ENCODE measurements at regions of chrX and their contacts with region 1.

Region 1: DNA sequence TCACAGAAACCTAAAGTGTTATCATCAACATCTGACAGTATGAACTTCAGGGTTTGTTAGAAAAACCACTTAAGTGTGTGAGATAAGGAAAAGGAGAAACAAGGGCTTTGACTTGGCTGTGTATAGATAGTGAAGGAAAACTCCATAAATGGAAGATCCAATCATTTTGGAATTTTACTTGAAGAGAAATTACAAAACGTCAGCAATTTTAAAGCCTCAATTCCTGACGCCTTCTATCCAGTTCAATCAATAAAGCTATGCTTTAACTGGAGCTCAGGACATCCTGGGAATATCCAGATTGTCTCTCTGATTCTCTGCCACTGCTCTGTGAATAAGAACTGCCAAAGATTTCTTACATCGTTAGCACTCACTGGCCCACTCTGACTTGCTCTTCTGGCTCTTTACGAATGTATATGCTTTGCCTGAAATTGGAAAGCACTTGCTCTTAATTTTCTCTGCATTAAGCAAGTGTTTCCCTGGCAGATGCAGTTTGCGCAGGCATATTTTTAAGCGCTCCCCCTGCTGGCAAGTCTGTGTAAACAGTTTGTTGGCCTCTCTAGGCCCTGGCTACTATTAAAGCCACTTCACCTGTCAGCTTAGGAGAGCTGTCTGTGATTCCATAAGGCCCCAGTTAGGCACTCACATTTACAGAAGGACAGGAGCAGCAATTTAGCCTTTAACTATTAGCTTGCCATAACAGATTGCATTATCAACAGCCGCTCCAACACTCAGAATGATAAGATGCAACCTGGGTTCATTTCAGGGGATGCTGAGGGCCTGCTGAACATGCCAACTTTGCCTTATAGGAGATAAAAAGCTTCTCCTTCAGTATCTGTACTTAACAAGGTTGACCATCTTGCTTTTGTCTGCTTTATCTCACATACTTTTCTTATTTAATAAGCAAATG is 251.4 kb upstream of the DDX53 start:
- DNase-seq: peak; percentile 68
- H3K4me3 Mint-ChIP-seq: no peak overlapping the region
- H3K27ac Mint-ChIP-seq: no peak overlapping the region
- H3K4me1 Mint-ChIP-seq: no peaks in the 10 kb centered on the region
- H3K27me3 Mint-ChIP-seq: peaks cover 79% of the 10 kb centered on the region
- CTCF ChIP-seq: peak; percentile 74

Region 2: GRCh38 chrX:22081475-22082092 is 666.8 kb before region 1 on chrX:
- CTCF ChIA-PET with region 1: interaction called, 5 read pairs
- POLR2A ChIA-PET with region 1: no interaction called
- intact Hi-C with region 1: loop called (anchors 5 kb)
- DNase-seq: peak; percentile 79
- H3K4me3 Mint-ChIP-seq: no peak overlapping the region
- H3K27ac Mint-ChIP-seq: no peak overlapping the region
- H3K4me1 Mint-ChIP-seq: peaks cover 6% of the 10 kb centered on the region
- H3K27me3 Mint-ChIP-seq: peaks cover 53% of the 10 kb centered on the region
- CTCF ChIP-seq: peak; percentile 86

Region 3: GRCh38 chrX:22192417-22193060 is 555.8 kb before region 1 on chrX:
- CTCF ChIA-PET with region 1: no interaction called
- POLR2A ChIA-PET with region 1: no interaction called
- intact Hi-C with region 1: loop called (anchors 5 kb)
- DNase-seq: peak; percentile 75
- H3K4me3 Mint-ChIP-seq: no peak overlapping the region
- H3K27ac Mint-ChIP-seq: no peak overlapping the region
- H3K4me1 Mint-ChIP-seq: peaks cover 6% of the 10 kb centered on the region
- H3K27me3 Mint-ChIP-seq: peaks cover 60% of the 10 kb centered on the region
- CTCF ChIP-seq: peak; percentile 76

Region 4: GRCh38 chrX:22365460-22365859 is 382.9 kb before region 1 on chrX:
- CTCF ChIA-PET with region 1: interaction called, 3 read pairs
- POLR2A ChIA-PET with region 1: no interaction called
- intact Hi-C with region 1: loop called (anchors 10 kb)
- DNase-seq: peak; percentile 96
- H3K4me3 Mint-ChIP-seq: peak overlapping the region; percentile 38
- H3K27ac Mint-ChIP-seq: peak overlapping the region; percentile 83
- H3K4me1 Mint-ChIP-seq: peaks cover 9% of the 10 kb centered on the region
- H3K27me3 Mint-ChIP-seq: peaks cover 57% of the 10 kb centered on the region
- CTCF ChIP-seq: no peak

Region 5: DNA sequence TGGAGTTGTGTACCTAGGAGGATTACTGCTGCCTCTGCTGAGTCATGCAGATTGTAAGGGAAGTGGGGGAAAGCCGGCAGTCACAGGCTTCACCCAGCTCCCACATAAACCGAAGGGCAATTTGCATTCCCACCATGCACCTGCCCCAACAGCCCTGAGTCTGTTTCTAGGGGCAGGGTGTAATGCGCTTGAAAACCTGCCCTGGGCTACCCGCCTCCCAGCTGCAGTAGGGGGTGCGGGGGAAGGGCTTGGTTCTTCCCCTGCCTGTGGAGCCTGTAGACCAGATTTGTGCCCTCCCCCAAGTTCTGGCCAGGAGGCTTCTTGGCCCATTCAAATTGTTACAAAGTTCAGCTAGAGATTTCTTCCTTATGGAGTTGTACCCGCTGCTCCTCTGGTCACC is 17.8 kb before region 1 on chrX:
- CTCF ChIA-PET with region 1: interaction called, 15 read pairs
- POLR2A ChIA-PET with region 1: interaction called, 3 read pairs
- intact Hi-C with region 1: no loop called
- DNase-seq: no peak
- H3K4me3 Mint-ChIP-seq: no peak overlapping the region
- H3K27ac Mint-ChIP-seq: no peak overlapping the region
- H3K4me1 Mint-ChIP-seq: no peaks in the 10 kb centered on the region
- H3K27me3 Mint-ChIP-seq: peaks cover 75% of the 10 kb centered on the region
- CTCF ChIP-seq: no peak

Region 6: DNA sequence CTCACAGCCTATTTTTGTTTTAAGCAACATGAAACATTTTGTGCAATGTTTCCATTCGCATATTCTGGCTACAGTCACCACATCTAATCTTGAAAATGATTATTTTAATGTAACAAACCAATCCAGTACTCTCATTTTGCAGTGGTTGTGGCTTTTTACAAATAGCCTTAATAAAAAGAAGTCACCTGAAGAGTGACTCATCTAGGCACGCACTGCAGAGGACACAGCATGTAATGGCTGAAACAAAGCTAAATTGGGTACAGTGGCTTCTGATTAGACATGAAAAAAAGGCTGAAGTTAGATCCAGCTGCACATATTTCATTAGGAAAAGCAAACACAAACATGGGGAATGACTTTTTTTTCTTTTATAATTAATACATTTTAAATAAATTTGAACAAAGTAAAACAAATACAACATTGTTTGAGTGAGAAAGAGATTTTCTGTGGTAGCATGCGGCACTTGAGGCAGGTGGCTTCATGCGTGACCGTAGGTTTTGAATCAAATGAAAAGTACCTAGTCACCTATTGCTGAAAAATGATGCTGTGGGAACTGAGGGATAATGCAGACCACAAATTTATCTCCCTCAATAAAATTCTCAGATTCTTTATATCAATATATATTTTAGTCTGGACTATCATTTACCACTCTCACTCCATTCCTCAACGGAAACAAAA is 10.6 kb after region 1 on chrX:
- CTCF ChIA-PET with region 1: interaction called, 15 read pairs
- POLR2A ChIA-PET with region 1: no interaction called
- intact Hi-C with region 1: no loop called
- DNase-seq: no peak
- H3K4me3 Mint-ChIP-seq: no peak overlapping the region
- H3K27ac Mint-ChIP-seq: no peak overlapping the region
- H3K4me1 Mint-ChIP-seq: no peaks in the 10 kb centered on the region
- H3K27me3 Mint-ChIP-seq: peaks cover 8% of the 10 kb centered on the region
- CTCF ChIP-seq: no peak